Mammary epithelial cell (primary cell): ENCODE measurements at regions of chr7 and their contacts with region 1.

Region 1: DNA sequence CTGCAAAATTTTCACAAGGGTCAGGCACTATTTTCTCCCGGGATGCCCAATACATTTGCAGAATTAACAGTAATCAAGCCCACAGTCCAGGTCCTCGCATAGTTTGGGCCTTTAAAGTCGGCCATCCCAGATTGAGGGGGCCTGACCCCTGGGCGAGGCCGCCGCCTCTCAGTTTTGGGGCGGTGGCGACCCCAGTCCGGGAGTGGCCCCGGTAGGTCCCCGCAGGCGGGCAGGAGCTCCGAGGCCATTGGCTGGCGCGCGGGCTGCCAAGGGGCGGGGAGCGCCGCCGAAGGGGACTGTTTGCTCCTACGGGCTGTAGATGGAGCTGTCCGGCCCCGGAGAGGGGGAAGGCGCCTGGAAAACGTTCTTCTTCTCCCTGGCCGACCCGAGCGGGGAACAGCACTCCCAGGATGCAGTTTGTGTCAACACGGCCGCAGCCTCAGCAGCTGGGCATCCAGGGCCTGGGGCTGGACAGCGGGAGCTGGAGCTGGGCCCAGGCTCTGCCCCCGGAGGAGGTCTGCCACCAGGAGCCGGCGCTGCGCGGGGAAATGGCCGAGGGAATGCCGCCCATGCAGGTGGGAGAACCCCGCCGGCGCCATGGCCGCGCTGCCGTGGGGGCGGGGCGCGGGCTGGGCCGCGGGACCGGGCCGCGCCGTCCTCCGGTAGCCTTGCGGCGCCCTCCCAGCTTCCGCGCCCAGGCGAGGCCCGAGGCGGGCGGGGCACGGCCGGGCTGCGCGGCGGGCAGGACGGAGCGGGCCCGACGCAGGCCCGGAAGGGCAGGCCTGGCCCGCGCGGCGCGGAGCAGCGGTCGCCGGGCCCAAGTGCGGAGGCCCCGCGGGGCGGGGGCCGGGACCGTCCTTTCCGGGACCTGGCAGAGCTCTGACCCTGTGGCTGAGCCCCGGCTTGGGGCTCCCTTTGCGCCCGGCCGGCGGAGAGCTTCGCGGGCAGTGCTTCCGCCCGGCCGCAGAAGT is at the start of gene ZNF282:
- DNase-seq: peak; percentile 87
- H3K4me3 ChIP-seq: peak within 1 kb of the TSS; percentile 80 to 89 (median 83)
- H3K27ac ChIP-seq: peak within 1 kb of the TSS; percentile 78
- H3K4me1 ChIP-seq: peaks cover 16% of the 10 kb centered on the region
- H3K27me3 ChIP-seq: no peaks in the 10 kb centered on the region
- CTCF ChIP-seq: peak; percentile 37 to 78
- total RNA-seq, gene ZNF282: 38.0 to 44.9 TPM

Region 2: GRCh38 chr7:149147072-149147751 is 48.3 kb before region 1 on chr7 and contains the start of gene ZNF398:
- CTCF ChIA-PET with region 1: interaction called, 5 read pairs
- dilution Hi-C with region 1: no loop called
- in situ Hi-C with region 1: no loop called
- intact Hi-C with region 1: loop called (anchors 1 kb)
- DNase-seq: peak; percentile 67
- H3K4me3 ChIP-seq: peak within 1 kb of the TSS; percentile 65 to 94 (median 89)
- H3K27ac ChIP-seq: peak within 1 kb of the TSS; percentile 26
- H3K4me1 ChIP-seq: peaks cover 22% of the 10 kb centered on the region
- H3K27me3 ChIP-seq: no peaks in the 10 kb centered on the region
- CTCF ChIP-seq: peak; percentile 24 to 53
- total RNA-seq, gene ZNF398: 16.0 to 26.2 TPM

Region 3: DNA sequence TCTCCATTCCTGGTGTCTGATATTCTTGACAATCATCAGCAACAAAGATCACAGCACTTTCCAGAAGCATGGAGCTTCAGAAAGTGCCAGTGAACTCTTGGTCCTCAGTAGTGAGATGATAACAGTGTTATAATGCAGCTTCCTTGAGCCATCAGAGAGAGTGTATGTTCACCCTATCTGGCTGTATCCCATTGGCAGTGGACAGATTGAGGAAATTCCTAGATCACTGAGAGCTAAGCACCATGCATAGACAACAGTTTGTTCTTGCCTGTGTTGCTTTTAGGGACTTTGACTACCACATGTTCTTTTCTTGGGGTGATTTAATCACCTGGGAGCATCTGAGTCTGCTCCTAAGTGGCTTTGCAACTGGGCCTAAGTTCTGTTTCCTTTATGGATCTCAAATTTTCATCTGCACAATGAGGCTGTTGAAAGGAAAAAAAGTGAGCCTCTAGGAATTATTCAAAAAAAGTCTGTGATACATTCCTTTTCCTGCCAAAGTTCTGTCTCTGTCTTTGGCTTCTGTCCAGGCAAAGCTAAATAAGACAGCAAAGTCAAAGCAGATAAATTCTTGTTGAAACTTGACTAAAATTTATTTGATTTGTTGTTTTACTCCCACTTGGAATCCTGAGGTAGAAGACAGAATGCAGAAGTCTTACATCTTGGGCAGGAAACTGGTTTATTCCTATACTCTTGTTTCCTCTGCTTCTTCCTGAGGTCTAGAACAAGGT is 14.6 kb before region 1 on chr7:
- CTCF ChIA-PET with region 1: interaction called, 11 read pairs
- dilution Hi-C with region 1: no loop called
- in situ Hi-C with region 1: no loop called
- intact Hi-C with region 1: no loop called
- DNase-seq: peak; percentile 51
- H3K4me3 ChIP-seq: no peak overlapping the region
- H3K27ac ChIP-seq: peak overlapping the region; percentile 32
- H3K4me1 ChIP-seq: peaks cover 24% of the 10 kb centered on the region
- H3K27me3 ChIP-seq: no peaks in the 10 kb centered on the region
- CTCF ChIP-seq: no peak

Region 4: DNA sequence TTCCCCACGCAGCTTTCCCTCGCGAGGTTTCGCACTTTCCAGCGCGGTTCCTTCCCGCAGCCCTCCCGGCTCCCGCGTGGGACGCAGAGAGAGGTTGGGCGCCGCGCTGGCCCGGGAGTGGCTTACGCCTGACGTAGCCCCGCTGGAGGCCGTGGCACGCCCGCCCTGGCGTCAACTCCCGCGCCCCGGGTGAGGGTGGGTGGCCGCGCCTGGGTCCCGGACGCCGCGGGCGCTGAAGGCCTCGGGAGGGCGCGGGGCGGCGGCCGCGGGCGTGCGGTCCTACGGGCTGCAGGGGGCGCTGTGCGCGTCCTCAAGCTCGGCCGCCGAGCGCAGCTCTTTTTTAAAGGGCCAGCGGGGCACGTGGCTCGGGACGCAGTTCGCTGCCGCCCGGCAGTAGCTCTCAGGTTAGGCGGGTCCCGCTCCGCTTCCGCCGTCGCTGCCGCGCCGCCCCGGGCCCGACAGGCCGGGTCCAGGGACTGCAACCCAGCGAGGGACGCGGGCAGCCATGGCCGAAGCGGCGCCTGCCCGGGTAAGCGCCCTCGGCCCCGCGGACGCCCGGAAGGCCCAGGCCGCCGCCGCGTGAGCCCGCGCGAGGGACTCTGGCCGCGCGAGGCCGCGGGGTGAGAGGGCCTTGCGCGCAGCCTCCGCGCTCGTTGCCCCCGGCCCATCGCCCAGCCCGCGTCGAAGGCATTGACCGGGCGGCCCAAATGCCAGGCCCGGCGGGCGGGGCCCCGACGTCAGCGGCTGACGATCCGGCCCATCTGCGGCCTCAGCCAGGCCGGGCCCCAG is 66.6 kb after region 1 on chr7 and contains the start of gene ZNF783:
- CTCF ChIA-PET with region 1: no interaction called
- dilution Hi-C with region 1: no loop called
- in situ Hi-C with region 1: no loop called
- intact Hi-C with region 1: no loop called
- DNase-seq: peak; percentile 77
- H3K4me3 ChIP-seq: peak within 1 kb of the TSS; percentile 53 to 70 (median 67)
- H3K27ac ChIP-seq: peak within 1 kb of the TSS; percentile 65
- H3K4me1 ChIP-seq: peaks cover 25% of the 10 kb centered on the region
- H3K27me3 ChIP-seq: no peaks in the 10 kb centered on the region
- CTCF ChIP-seq: peak; percentile 46 to 66
- total RNA-seq, gene ZNF783: 11.7 to 14.5 TPM

Region 5: GRCh38 chr7:149284850-149285626 is 89.6 kb after region 1 on chr7:
- CTCF ChIA-PET with region 1: interaction called, 5 read pairs
- dilution Hi-C with region 1: no loop called
- in situ Hi-C with region 1: no loop called
- intact Hi-C with region 1: loop called (anchors 2 kb)
- DNase-seq: peak; percentile 75
- H3K4me3 ChIP-seq: peak overlapping the region; percentile 17 to 53 (median 52)
- H3K27ac ChIP-seq: no peak overlapping the region
- H3K4me1 ChIP-seq: peaks cover 7% of the 10 kb centered on the region
- H3K27me3 ChIP-seq: no peaks in the 10 kb centered on the region
- CTCF ChIP-seq: no peak